Sigmoid colon (tissue), 7 donors: ENCODE measurements at regions of chr4 and their contacts with region 1.

Region 1: DNA sequence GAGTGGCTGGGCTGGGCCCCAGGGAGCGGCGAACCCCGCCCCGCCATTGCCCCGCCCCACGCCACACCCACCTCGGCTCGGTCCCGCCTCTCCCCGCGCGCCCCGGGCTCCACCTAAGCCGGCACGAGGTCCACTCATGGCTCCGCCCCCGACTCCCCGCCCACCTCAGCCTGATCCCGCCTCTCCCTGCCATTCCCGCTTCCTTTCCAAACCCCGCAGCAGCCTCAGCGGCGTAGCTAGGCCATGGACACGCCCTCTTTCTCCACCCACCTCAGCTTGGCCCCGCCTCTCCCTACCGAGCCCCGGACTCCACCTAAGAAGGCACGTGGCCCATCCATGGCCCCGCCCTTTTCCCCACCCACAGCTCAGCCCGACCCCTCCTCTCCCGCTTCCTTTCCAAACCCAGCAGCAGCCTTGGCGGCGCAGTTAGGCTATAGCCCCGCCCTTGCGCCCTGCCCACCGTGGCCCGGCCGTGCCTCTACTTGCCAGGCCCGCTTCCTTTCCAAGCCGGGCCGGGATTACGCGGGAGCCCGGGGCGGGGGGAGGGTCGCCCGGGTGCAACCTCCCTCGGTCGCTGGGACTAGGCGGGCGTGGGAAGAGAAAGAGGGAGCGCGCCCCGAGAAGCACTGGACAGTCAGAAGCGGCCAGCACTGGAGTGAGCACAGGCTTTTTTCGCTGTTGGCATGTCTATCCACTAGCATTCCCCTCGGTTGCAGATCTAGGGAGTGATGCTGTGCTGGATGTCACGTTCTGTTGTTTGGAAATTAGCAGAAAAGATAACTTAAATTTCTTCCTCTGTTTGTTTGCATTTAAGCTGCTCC is at the start of gene RELL1:
- DNase-seq: peak; percentile 100
- H3K4me3 ChIP-seq: peak within 1 kb of the TSS; percentile 81 to 98 (median 89)
- H3K27ac ChIP-seq: peak within 1 kb of the TSS; percentile 96 to 100 (median 98)
- H3K4me1 ChIP-seq: peaks cover 0 to 38% (median 28%) of the 10 kb centered on the region in 4 donors
- H3K27me3 ChIP-seq: no peaks in the 10 kb centered on the region
- CTCF ChIP-seq: no peak
- EP300 ChIP-seq: no peak
- POLR2A ChIP-seq: no peak
- total RNA-seq, gene RELL1: 38.8 to 63.2 (median 47.1) TPM

Region 2: DNA sequence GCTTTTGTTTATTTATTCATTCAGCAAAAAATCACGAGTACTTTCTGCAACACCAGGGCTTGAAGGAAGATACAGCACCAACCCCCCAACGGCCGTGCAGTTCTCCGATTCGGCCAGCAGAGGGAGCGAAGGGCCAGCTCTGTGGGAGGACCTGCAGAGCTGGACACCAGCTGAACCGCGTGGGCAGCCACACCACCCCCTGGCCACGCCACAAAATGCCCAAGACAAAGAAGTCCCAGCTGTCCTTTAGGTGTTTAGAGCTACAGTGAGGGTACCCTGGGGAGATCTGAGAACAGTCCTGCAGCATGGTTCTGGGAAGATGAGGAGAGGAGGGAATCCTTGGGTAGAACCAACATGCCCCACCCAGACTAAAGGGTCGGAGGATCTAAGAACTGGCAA is 83.5 kb before region 1 on chr4:
- intact Hi-C with region 1: loop called (anchors 2 kb)
- DNase-seq: peak; percentile 88
- H3K4me3 ChIP-seq: no peak overlapping the region
- H3K27ac ChIP-seq: no peak overlapping the region
- H3K4me1 ChIP-seq: peaks cover 0 to 6% (median 2%) of the 10 kb centered on the region in 4 donors
- H3K27me3 ChIP-seq: no peaks in the 10 kb centered on the region
- CTCF ChIP-seq: peak; percentile 85 to 99 (median 96)
- EP300 ChIP-seq: no peak
- POLR2A ChIP-seq: no peak

Region 3: GRCh38 chr4:37802068-37802666 is 115.6 kb after region 1 on chr4:
- intact Hi-C with region 1: loop called (anchors 5 kb)
- DNase-seq: no peak
- H3K4me3 ChIP-seq: no peak overlapping the region
- H3K27ac ChIP-seq: no peak overlapping the region
- H3K4me1 ChIP-seq: peaks cover 0 to 18% (median 10%) of the 10 kb centered on the region in 4 donors
- H3K27me3 ChIP-seq: no peaks in the 10 kb centered on the region
- CTCF ChIP-seq: peak in 3 of 4 experiments; percentile 18 to 59 (median 38)
- EP300 ChIP-seq: no peak
- POLR2A ChIP-seq: no peak

Region 4: DNA sequence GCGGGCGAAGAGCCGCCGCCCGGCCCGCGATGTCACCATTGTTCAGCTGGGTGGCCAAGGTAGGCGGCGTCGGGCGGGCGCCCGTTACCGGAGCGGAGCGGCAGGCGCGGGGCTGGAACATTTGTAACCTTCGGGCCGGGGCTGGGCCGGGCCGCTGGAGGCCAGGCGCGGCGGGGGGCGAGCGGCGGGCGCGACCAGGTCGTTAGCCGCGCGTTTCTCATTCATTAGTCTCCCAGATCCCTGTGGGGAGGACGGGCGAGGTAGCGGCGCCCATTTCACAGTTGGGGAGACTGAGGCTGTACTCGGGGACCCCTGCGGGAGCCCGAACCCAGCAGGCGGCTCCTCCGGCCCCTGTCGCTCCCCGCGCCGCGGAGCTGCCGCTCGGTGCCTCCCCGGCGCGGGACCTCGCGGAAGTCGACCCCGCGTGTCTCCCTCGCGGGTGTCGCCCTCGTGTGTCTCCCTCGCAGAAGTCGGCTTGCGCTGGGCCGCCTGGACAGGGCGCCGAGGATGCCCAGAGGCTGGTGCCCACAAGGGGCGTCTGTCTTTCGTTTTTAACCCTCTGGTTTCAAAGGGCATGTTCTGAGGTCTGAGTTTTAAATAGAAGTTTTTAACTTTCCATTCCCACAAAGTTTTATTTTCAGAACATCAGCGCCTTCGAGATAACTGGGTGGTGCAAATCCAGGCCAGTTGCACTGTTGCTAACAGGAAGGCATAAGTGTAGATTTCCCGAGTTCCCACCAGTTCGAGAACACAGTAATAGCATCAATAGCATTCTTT is 291.1 kb after region 1 on chr4:
- intact Hi-C with region 1: loop called (anchors 5 kb)
- DNase-seq: peak; percentile 90
- H3K4me3 ChIP-seq: peak overlapping the region; percentile 61 to 98 (median 80)
- H3K27ac ChIP-seq: peak overlapping the region; percentile 96 to 98 (median 98)
- H3K4me1 ChIP-seq: peaks cover 0 to 52% (median 47%) of the 10 kb centered on the region in 4 donors
- H3K27me3 ChIP-seq: no peaks in the 10 kb centered on the region
- CTCF ChIP-seq: peak; percentile 63 to 75 (median 72)
- EP300 ChIP-seq: no peak
- POLR2A ChIP-seq: no peak

Region 5: DNA sequence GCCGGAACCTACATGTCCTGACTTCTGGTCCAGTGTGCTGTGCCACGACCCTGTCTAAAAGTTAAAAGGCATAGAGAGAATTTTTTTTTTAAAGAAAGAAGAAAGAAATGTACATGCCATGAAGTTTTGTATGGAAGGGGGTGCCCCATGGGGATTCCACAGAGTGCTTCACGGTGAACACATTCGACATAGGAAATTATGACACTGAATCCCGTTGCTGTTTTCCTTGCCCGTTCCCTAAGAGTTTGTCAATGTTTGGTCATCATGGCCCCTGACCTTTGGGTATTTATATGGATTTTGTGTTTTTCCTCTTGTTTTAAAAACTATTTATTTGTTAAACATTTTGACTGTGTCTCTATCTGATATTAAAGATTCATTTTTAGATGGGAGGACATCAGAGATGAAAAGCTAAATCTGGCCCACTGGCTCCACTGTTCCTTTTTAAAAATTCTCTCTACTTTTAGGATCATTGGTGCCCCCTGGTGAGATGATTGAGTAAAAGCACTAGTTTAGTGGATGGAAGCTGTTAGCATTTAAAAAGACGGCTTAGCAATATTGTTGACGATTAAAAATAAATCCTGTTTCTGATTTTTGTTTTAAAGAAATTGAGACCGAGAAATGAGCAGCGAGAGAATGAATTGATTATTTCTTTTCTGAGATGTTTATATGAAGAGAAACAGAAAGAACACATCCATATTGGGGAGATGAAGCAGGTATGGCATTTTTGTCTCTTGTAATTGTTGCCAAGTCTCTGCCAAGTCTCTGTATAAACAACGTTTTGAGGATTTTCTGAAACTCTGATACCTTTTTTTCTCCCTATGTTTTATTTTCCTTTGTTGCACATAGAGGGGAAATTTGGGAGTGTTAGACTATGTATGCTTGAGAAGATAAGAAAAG is 348.7 kb after region 1 on chr4:
- intact Hi-C with region 1: loop called (anchors 10 kb)
- DNase-seq: no peak
- H3K4me3 ChIP-seq: no peak overlapping the region
- H3K27ac ChIP-seq: peak overlapping the region; percentile 39 to 62 (median 57)
- H3K4me1 ChIP-seq: peaks cover 0 to 43% (median 33%) of the 10 kb centered on the region in 4 donors
- H3K27me3 ChIP-seq: no peaks in the 10 kb centered on the region
- CTCF ChIP-seq: peak; percentile 55 to 79 (median 65)
- EP300 ChIP-seq: no peak
- POLR2A ChIP-seq: no peak

Region 6: DNA sequence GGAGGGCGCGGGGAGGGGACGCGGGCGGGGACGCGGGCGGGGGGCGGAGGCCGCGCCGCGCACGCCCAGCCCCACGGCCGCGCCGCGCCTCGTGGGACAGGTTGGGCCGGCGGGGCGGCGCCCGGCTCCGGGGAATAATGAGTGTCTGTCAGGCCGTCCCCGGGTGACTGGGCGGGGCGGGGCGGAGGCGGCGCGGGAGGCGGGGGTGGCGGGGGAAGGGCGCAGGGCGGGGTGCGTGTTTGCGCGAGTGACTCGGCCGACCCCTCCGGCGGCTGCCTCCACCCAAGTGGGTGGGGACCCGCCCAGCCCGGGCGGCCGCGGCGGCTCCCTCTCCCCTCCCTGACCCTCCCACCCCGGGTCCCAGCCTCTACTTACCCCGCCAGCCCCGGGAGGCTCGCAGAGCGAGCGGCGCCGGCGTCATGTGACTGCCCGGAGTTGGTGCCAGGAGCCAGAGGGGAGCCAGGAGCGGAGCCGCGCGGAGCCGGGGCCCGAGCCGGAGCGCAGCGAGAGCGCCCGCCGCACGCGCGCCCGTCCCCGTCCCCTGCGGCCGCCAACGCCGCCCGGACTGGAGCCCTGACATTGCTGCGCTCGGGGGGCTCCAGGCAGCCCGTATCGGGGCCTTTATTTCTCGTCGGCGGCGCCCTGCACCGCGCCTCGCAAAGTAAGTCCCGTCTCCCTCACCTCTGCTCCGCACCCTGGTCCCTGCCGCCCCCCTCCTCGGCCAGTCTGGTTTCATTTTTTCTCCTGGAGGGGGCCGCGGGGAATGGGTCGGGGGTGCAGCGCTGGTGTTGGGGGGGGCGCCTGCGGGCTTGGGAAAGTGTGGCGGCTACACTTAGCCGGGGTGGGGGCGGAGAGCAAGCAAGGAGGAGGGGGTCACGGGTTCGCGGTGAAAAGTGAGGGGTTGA is 977.5 kb after region 1 on chr4 and contains the start of gene KLF3:
- intact Hi-C with region 1: loop called (anchors 5 kb)
- DNase-seq: peak; percentile 97
- H3K4me3 ChIP-seq: peak within 1 kb of the TSS; percentile 94 to 100 (median 98)
- H3K27ac ChIP-seq: peak within 1 kb of the TSS; percentile 99 to 100 (median 100)
- H3K4me1 ChIP-seq: peaks cover 0 to 50% (median 40%) of the 10 kb centered on the region in 4 donors
- H3K27me3 ChIP-seq: no peaks in the 10 kb centered on the region
- CTCF ChIP-seq: no peak
- EP300 ChIP-seq: peak in 2 of 4 donors; percentile 40 to 43
- POLR2A ChIP-seq: peak; percentile 52 to 54
- total RNA-seq, gene KLF3: 29.2 to 43.5 (median 38.0) TPM

Region 7: DNA sequence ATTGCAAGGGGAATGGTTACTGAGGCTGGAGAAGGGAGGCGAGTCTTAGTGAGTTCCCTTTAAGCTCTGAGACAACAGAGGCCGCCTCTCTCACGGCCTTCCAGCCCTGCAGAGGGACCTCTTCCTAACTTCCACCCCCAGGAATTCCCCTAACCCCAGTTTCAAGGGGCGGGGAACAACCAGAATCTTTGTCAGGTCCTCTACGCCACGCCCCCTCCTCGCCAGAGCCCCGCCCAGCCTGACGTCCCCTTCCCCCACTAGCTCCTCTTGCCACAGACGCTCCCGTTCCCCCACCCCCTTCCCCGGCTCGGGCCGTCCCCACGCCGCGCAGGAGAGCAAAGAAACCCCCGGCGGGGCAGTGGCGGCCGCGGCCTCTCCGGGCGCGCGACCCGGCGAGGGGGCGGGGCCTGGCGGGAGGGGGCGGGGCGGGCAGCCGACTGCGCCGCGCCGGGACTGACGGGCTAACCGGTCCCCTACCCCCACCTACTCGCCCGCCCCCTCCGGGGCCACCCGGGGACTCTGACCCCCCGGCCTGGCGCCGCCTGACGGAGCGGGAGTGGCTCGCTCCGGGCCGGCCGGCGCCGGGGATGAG is 1357.9 kb after region 1 on chr4:
- intact Hi-C with region 1: loop called (anchors 10 kb)
- DNase-seq: peak; percentile 97
- H3K4me3 ChIP-seq: peak overlapping the region; percentile 49 to 98 (median 93)
- H3K27ac ChIP-seq: peak overlapping the region; percentile 92 to 100 (median 97)
- H3K4me1 ChIP-seq: peaks cover 0 to 59% (median 44%) of the 10 kb centered on the region in 4 donors
- H3K27me3 ChIP-seq: no peaks in the 10 kb centered on the region
- CTCF ChIP-seq: no peak
- EP300 ChIP-seq: no peak
- POLR2A ChIP-seq: peak in 1 of 2 donors; percentile 0